Mammary epithelial cell (primary cell): ENCODE measurements at regions of chr10 and their contacts with region 1.

Region 1: DNA sequence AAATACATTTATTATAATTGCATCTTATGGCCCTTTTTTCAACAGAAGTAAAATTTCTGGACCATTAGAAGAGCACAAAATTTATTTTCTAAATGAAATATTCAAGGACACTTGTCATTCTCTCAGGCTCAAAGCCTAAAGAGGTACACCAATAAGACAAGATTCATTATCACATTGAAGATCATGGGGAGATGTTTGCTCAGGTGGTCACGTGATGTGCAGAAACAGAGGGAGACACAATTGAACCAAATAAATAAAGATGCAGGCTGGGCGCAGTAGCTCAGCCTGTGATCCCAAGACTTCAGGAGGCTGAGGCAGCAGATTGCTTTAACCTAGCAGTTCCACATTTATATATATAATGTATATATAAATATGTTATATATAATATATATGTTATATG is 53.2 kb upstream of the TMEM254 start:
- DNase-seq: no peak
- H3K4me3 ChIP-seq: no peak overlapping the region
- H3K27ac ChIP-seq: no peak overlapping the region
- H3K4me1 ChIP-seq: no peaks in the 10 kb centered on the region
- H3K27me3 ChIP-seq: no peaks in the 10 kb centered on the region
- CTCF ChIP-seq: no peak

Region 2: GRCh38 chr10:79542626-79543025 is 482.7 kb before region 1 on chr10:
- CTCF ChIA-PET with region 1: interaction called, 15 read pairs
- dilution Hi-C with region 1: no loop called
- in situ Hi-C with region 1: no loop called
- intact Hi-C with region 1: loop called (anchors 5 kb)
- DNase-seq: no peak
- H3K4me3 ChIP-seq: no peak overlapping the region
- H3K27ac ChIP-seq: no peak overlapping the region
- H3K4me1 ChIP-seq: no peaks in the 10 kb centered on the region
- H3K27me3 ChIP-seq: peaks cover 2% of the 10 kb centered on the region
- CTCF ChIP-seq: no peak

Region 3: DNA sequence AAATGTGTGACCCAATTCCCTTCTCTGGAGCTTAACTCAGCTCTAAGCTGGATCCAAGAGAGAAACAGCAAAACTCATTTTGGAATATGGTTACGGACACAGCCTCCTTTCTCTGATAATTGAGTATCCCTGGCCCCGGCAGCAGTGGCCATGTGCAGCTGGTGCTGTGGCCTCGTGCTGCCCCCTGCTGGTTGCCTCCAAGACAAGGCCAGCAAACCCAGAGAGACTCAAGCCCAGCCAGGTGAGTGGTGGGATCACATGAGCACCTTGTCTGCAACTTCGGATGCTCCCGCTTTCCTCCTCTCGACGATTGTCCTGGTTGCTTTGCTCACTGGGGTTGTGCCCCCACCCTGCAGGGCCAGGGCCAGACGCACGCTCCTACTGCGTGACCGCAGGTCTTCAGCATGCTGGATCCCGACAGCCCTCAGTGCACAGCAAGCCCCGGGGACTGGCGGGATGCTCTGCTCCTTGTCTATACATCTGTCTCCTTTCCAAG is 95.8 kb before region 1 on chr10:
- CTCF ChIA-PET with region 1: no interaction called
- dilution Hi-C with region 1: no loop called
- in situ Hi-C with region 1: no loop called
- intact Hi-C with region 1: loop called (anchors 2 kb)
- DNase-seq: peak; percentile 54
- H3K4me3 ChIP-seq: no peak overlapping the region
- H3K27ac ChIP-seq: no peak overlapping the region
- H3K4me1 ChIP-seq: peaks cover 4% of the 10 kb centered on the region
- H3K27me3 ChIP-seq: peaks cover 10% of the 10 kb centered on the region
- CTCF ChIP-seq: peak; percentile 71 to 93

Region 4: DNA sequence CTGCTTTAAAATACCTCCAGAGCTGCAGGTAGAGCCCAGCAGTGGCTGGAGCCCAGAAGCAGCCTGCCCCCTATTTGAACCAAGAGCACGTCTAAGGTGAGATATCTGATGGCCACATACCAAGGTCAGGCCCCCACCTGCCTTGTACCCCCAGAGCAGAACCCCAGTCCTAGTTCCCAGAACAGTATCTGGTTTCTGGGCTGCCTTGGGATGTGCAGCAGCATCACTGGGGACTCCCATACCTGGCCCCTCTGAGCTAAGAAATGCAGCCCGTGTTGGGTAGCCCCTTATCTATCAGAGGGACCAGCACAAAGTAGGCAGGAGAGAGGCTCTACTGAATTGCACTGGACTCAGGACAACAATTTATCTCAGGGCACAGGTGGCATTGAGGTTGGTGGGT is 85.3 kb before region 1 on chr10:
- CTCF ChIA-PET with region 1: no interaction called
- dilution Hi-C with region 1: no loop called
- in situ Hi-C with region 1: no loop called
- intact Hi-C with region 1: no loop called
- DNase-seq: no peak
- H3K4me3 ChIP-seq: no peak overlapping the region
- H3K27ac ChIP-seq: no peak overlapping the region
- H3K4me1 ChIP-seq: no peaks in the 10 kb centered on the region
- H3K27me3 ChIP-seq: peaks cover 14% of the 10 kb centered on the region
- CTCF ChIP-seq: no peak